ENCODE measurements at regions of chr12 and their contacts with region 1.

Region 1: DNA sequence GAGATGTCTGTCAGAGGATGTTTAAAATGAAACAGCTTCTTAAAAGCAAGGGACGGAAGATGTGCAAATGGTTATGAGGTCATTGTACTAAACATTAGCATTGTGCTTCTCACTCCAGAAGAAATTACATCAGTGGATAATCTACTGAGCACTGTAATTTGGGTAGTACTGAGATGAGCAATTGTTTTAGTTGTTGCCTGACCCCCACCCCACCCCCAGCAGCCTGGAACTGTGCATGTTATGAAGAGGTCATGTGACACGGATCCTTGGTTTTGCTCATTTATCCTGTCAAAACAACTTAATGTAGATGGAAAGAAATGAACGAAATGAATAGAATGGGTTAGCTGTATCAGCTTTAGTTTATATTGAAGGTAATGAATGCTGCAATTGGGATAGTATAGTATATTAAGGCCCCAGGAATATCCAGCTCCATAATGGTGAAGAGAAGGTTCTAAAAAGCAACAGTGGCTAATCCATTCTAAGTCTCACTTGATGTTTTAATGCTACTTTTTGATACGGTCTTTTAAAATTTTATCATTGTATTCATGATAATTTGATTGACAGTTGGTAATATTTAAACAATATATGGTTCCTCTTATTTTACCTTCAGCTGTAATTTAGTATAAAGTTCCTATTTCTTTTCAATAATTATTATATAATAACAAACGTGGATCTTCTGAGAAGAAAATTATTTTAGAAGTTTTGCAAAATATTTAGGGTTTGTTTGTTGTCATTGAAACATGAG is 58.5 kb downstream of the WNK1 start:
- DNase-seq: peak; percentile 84
- ATAC-seq: peak; percentile 95
- H3K4me3 Mint-ChIP-seq: peak overlapping the region; percentile 32
- H3K27ac Mint-ChIP-seq: peak overlapping the region; percentile 78
- H3K4me1 Mint-ChIP-seq: peaks cover 68% of the 10 kb centered on the region
- H3K27me3 Mint-ChIP-seq: no peaks in the 10 kb centered on the region

Region 2: DNA sequence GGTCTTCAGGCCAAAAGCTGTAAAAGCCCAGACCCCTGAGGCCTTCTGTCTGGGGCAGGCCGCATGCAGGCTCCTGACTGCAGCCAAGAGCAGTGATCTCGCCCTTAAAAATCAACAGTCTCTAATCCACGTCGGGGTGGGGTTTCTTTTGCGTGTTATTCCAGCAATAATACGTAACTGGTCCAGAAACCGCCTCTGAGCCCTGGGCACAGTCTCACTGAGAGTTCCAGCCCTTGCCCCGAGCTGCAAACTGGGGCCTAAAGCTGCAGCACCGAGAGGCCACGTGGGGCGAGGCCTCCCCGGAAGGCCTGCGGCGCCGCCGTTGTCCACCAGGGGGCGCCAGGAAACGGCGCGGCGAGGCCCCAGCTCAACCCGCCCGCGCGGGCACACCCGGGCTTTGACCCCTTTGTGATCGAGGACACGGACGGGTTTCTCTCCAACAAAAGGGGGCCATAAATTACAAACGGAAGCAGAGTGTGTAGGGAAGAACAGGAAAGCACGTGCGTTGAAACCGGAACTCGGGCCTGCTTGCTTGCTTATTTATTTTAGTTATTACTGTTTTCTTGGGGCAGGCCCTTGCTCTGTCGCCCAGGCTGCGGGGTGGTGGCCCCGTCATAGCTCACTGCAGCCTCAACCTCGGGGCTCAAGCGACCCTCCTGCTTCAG is 234.8 kb before region 1 on chr12:
- CTCF ChIA-PET with region 1: interaction called, 42 read pairs
- POLR2A ChIA-PET with region 1: no interaction called
- intact Hi-C with region 1: loop called (anchors 1 kb)
- DNase-seq: peak; percentile 91
- ATAC-seq: peak; percentile 83
- H3K4me3 Mint-ChIP-seq: peak overlapping the region; percentile 46
- H3K27ac Mint-ChIP-seq: peak overlapping the region; percentile 77
- H3K4me1 Mint-ChIP-seq: peaks cover 42% of the 10 kb centered on the region
- H3K27me3 Mint-ChIP-seq: no peaks in the 10 kb centered on the region

Region 3: GRCh38 chr12:630656-631632 is 179.9 kb before region 1 on chr12:
- CTCF ChIA-PET with region 1: interaction called, 6 read pairs
- POLR2A ChIA-PET with region 1: interaction called, 8 read pairs
- intact Hi-C with region 1: loop called in 1 of 2 experiments (anchors 5 kb)
- DNase-seq: peak; percentile 91
- ATAC-seq: peak; percentile 98
- H3K4me3 Mint-ChIP-seq: peak overlapping the region; percentile 88
- H3K27ac Mint-ChIP-seq: peak overlapping the region; percentile 100
- H3K4me1 Mint-ChIP-seq: peaks cover 47% of the 10 kb centered on the region
- H3K27me3 Mint-ChIP-seq: no peaks in the 10 kb centered on the region

Region 4: GRCh38 chr12:848173-848865 is 37.5 kb after region 1 on chr12:
- CTCF ChIA-PET with region 1: interaction called, 10 read pairs
- POLR2A ChIA-PET with region 1: no interaction called
- intact Hi-C with region 1: loop called in 1 of 2 experiments (anchors 2 kb)
- DNase-seq: no peak
- ATAC-seq: peak; percentile 72
- H3K4me3 Mint-ChIP-seq: peak overlapping the region; percentile 0
- H3K27ac Mint-ChIP-seq: peak overlapping the region; percentile 85
- H3K4me1 Mint-ChIP-seq: peaks cover 54% of the 10 kb centered on the region
- H3K27me3 Mint-ChIP-seq: no peaks in the 10 kb centered on the region